Right lobe of liver (tissue), 6 donors: ENCODE measurements at regions of chr22 and their contacts with region 1.

Region 1: GRCh38 chr22:43476341-43476740 is 64.5 kb downstream of the MPPED1 start:
- DNase-seq: peak in 2 of 3 donors; percentile 47 to 58
- ATAC-seq: peak; percentile 19 to 38 (median 34)
- H3K4me3 ChIP-seq: no peak overlapping the region
- H3K27ac ChIP-seq: no peak overlapping the region
- H3K4me1 ChIP-seq: peaks cover 0 to 9% (median 0%) of the 10 kb centered on the region in 4 donors
- H3K27me3 ChIP-seq: no peaks in the 10 kb centered on the region
- CTCF ChIP-seq: peak; percentile 29 to 44 (median 30)
- POLR2A ChIP-seq: no peak

Region 2: DNA sequence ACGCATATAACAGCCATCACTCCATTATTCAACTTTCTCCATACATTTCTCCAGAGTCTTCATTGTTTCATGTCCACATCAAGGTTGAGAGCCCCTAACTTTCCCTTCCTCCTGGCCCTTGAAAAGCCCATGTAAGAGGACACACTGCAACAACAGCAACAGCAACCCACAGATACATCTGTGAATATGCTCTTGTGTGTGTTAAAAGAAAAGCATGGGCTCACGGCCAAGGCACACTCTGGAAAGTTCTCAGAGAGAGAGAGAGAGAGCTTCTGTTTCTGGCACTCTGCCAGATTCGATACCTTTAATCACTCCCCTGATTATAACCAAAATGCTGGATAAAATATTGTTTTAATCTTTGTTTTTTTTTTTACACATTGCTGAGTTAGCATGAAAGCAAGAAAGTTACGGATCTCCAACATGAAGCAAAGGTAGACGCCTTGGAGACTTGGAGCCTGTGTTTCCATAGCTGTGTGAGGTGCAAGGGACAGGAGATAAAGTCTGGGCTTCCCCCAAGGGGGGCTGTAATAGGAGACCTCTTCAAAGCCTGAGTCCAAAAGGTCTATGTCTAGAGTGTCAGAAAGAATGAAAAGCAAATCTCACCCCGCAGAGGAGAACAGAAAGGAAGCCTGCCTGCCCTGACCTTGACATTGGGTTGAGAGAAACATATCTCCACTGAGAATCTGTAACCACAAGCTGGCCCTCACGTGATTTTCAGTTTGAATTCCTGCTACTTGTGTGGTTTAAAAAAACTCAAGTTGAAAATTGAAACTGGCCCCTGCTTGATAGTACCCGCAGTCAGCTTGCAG is 98.2 kb before region 1 on chr22:
- intact Hi-C with region 1: no loop called
- DNase-seq: peak in 2 of 3 donors; percentile 48 to 75
- ATAC-seq: peak; percentile 70 to 75 (median 73)
- H3K4me3 ChIP-seq: peak overlapping the region in 1 of 3 donors; percentile 2
- H3K27ac ChIP-seq: peak overlapping the region in 2 of 3 donors; percentile 18 to 72
- H3K4me1 ChIP-seq: peaks cover 0 to 25% (median 12%) of the 10 kb centered on the region in 4 donors
- H3K27me3 ChIP-seq: no peaks in the 10 kb centered on the region
- CTCF ChIP-seq: no peak
- POLR2A ChIP-seq: no peak

Region 3: GRCh38 chr22:43404673-43405385 is 71.5 kb before region 1 on chr22:
- intact Hi-C with region 1: loop called in 1 of 2 experiments (anchors 10 kb)
- DNase-seq: peak in 1 of 3 donors; percentile 49
- ATAC-seq: no peak
- H3K4me3 ChIP-seq: no peak overlapping the region
- H3K27ac ChIP-seq: no peak overlapping the region
- H3K4me1 ChIP-seq: peaks cover 0 to 21% (median 4%) of the 10 kb centered on the region in 4 donors
- H3K27me3 ChIP-seq: no peaks in the 10 kb centered on the region
- CTCF ChIP-seq: no peak
- POLR2A ChIP-seq: no peak

Region 4: DNA sequence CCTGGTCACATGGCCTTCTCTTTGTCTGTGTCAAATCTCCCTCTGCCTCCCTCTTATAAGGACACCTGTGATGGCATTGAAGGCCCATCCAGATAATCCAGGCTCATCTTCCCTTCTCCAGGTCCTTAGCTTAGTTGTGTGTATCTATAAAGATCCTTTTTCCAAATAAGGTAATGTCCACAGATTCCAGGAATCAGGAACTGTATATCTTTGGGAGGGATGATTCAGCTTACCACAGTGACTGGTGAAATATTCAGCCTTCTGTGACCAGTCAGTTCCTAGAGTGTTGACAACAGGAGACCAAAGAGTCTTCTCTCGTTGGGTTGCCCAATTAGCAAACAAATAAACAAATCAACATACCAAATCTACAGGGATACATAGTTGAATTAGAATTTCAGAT is 111.2 kb after region 1 on chr22:
- intact Hi-C with region 1: no loop called
- DNase-seq: no peak
- ATAC-seq: no peak
- H3K4me3 ChIP-seq: no peak overlapping the region
- H3K27ac ChIP-seq: no peak overlapping the region
- H3K4me1 ChIP-seq: no peaks in the 10 kb centered on the region
- H3K27me3 ChIP-seq: no peaks in the 10 kb centered on the region
- CTCF ChIP-seq: no peak
- POLR2A ChIP-seq: no peak